ENCODE measurements at regions of chr7 and their contacts with region 1.

Region 1: DNA sequence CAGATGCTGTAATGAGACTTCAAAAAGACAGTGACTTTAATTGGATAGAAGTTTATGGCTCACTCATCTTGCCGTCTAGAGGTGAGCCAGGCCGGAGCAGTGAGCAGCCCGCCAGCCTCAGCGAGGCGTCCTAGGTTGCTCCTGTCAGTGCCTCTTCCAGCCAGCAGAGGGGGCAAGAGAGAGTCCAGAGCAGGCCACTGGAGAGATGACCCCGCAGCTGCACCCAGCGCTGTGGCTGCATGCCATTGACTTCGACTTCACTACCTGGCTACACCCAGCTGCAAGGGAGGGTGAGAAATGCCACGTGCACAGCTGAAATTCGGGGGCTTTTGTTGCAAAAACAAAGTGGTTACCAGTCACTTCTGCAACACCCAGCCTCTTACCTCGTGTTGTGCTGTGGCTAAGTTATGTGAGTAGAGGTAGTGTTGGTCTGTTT is 26.5 kb downstream of the NUB1 start:
- DNase-seq: peak; percentile 74 to 81 (median 75)
- H3K4me3 ChIP-seq: no peak overlapping the region
- H3K4me3 Mint-ChIP-seq: peak overlapping the region in 1 of 8 donors; percentile 38
- H3K27ac ChIP-seq: no peak overlapping the region
- H3K27ac Mint-ChIP-seq: peak overlapping the region in 6 of 7 donors; percentile 44 to 92 (median 88)
- H3K4me1 ChIP-seq: peaks cover 10% of the 10 kb centered on the region
- H3K4me1 Mint-ChIP-seq: peaks cover 6 to 16% (median 10%) of the 10 kb centered on the region in 4 donors
- H3K27me3 ChIP-seq: no peaks in the 10 kb centered on the region
- H3K27me3 Mint-ChIP-seq: no peaks in the 10 kb centered on the region

Region 2: DNA sequence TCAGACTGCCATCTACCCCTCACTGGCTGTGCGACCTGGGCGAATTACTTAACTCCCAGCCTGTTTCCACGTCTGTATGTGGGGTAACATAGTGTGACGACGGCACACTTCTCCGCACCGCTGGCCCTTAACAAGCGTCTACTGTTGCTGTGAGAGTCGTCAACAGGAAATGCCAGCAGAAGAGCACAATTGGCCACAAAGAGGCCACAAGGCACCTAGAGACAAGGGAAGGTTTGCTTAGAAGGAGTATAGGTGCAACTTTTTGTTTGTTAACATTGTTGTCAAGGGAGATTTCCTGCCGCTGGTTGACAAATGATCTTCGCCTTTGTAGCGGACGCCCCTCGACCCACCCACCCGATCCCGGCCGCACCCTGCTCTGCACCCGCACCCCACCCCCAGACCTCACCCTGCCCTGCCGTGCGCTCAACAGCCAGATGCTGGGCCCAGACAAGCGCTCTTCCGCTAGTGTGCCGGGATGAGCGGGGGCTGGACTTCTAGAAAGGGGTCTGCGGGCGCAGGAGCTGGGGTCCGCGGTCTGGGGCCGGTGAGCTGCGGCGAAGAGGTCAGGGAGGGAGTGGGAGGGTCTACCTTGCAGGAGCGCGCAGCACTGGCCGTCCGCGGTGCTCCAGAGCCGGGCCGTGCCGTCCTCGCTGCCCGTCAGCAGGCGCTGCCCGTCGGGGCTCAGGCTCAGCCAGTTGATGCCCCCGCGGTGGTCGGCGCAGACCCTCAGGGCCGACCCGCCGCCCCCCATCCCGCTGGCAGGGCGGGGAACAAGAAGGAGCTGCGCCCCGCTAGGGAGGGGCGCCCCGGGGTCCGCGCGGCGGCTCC is 40.9 kb after region 1 on chr7:
- CTCF ChIA-PET with region 1: interaction called, 5 read pairs
- POLR2A ChIA-PET with region 1: interaction called, 5 read pairs
- intact Hi-C with region 1: loop called (anchors 1 kb)
- DNase-seq: peak; percentile 85 to 95 (median 95)
- H3K4me3 ChIP-seq: peak overlapping the region; percentile 9 to 58
- H3K4me3 Mint-ChIP-seq: peak overlapping the region; percentile 79 to 89 (median 84)
- H3K27ac ChIP-seq: peak overlapping the region; percentile 89
- H3K27ac Mint-ChIP-seq: peak overlapping the region; percentile 81 to 99 (median 99)
- H3K4me1 ChIP-seq: peaks cover 41% of the 10 kb centered on the region
- H3K4me1 Mint-ChIP-seq: peaks cover 20 to 80% (median 32%) of the 10 kb centered on the region in 4 donors
- H3K27me3 ChIP-seq: no peaks in the 10 kb centered on the region
- H3K27me3 Mint-ChIP-seq: peaks cover 1 to 3% of the 10 kb centered on the region in 2 donors

Region 3: GRCh38 chr7:151759591-151760042 is 391.5 kb after region 1 on chr7:
- CTCF ChIA-PET with region 1: interaction called, 3 read pairs
- POLR2A ChIA-PET with region 1: no interaction called
- intact Hi-C with region 1: loop called (anchors 5 kb)
- DNase-seq: peak; percentile 50 to 59 (median 58)
- H3K4me3 ChIP-seq: no peak overlapping the region
- H3K4me3 Mint-ChIP-seq: no peak overlapping the region
- H3K27ac ChIP-seq: no peak overlapping the region
- H3K27ac Mint-ChIP-seq: peak overlapping the region in 6 of 7 donors; percentile 41 to 79 (median 56)
- H3K4me1 ChIP-seq: peaks cover 19% of the 10 kb centered on the region
- H3K4me1 Mint-ChIP-seq: peaks cover 9 to 37% (median 29%) of the 10 kb centered on the region in 4 donors
- H3K27me3 ChIP-seq: no peaks in the 10 kb centered on the region
- H3K27me3 Mint-ChIP-seq: no peaks in the 10 kb centered on the region

Measured in CD4-positive, alpha-beta memory T cell (primary cell).